ENCODE measurements at regions of chr3 and their contacts with region 1.

Region 1: GRCh38 chr3:197256836-197257444 is 41.5 kb downstream of the DLG1 start:
- DNase-seq: peak; percentile 15
- H3K4me3 ChIP-seq: no peak overlapping the region
- H3K27me3 ChIP-seq: no peaks in the 10 kb centered on the region
- CTCF ChIP-seq: peak; percentile 56

Region 2: GRCh38 chr3:197165890-197166289 is 91.0 kb before region 1 on chr3:
- CTCF ChIA-PET with region 1: no interaction called
- POLR2A ChIA-PET with region 1: no interaction called
- DNase-seq: no peak
- H3K4me3 ChIP-seq: no peak overlapping the region
- H3K27me3 ChIP-seq: no peaks in the 10 kb centered on the region
- CTCF ChIP-seq: no peak

Region 3: GRCh38 chr3:197234947-197235914 is 21.7 kb before region 1 on chr3:
- CTCF ChIA-PET with region 1: interaction called, 10 read pairs
- POLR2A ChIA-PET with region 1: no interaction called
- DNase-seq: no peak
- H3K4me3 ChIP-seq: no peak overlapping the region
- H3K27me3 ChIP-seq: no peaks in the 10 kb centered on the region
- CTCF ChIP-seq: no peak

Region 4: GRCh38 chr3:197270558-197271317 is 13.8 kb after region 1 on chr3:
- CTCF ChIA-PET with region 1: interaction called, 33 read pairs
- POLR2A ChIA-PET with region 1: no interaction called
- DNase-seq: no peak
- H3K4me3 ChIP-seq: no peak overlapping the region
- H3K27me3 ChIP-seq: no peaks in the 10 kb centered on the region
- CTCF ChIP-seq: no peak

Region 5: DNA sequence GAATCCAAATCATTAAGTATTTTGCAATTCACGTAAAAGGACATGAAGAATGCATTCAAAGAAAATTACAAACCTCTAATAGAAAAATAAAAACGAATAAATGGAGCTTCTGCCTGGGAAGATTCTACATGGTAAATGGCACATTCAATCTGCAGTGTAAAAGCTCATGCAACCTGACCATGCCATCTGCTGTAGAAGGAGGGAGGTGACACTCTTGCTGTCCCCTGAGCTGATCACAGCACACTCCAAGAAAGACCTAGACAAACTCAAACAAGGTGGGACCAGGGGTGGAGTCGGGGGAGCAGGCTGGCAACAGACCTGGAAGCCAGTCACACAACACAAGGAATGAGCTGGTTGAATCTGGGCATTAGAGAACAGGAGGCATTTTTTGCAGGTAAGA is 197.1 kb after region 1 on chr3:
- CTCF ChIA-PET with region 1: interaction called, 26 read pairs
- POLR2A ChIA-PET with region 1: no interaction called
- DNase-seq: no peak
- H3K4me3 ChIP-seq: no peak overlapping the region
- H3K27me3 ChIP-seq: no peaks in the 10 kb centered on the region
- CTCF ChIP-seq: peak; percentile 34

Region 6: DNA sequence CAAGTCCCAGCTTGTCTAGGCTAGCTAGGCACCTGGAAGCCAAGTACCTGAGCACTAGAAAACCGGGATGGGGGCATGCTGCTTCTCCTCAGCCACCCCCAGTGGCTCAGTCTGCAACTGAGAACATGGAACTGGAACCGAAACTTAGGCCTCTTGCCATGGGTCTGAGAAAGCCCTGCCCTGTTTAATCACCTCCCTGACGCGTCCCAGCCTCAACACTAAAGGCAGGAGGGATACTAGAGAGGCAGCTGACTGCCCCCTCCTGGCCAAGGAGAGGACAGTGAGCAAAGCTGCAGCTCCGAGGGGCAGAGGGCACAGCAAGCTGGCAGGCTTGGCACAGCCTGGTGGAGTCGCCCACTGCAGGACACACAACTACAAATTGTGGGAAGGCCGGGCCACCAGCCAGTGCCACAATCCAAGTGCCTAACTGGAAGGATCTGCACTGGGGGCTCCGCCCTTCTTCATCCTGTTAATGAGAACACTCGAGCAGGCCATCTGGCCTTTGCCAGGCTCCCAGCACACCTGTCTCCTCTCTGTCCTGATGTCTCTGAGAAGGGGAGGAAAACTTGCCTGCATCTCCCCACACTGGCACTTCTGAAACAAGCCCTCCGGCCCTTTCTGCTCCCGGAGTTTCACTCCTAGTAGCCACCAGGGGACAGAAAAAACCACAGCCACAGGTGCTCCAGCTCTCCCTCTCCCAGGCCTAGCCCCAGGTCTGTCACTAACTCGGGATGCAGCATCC is 245.1 kb after region 1 on chr3:
- CTCF ChIA-PET with region 1: interaction called, 32 read pairs
- POLR2A ChIA-PET with region 1: no interaction called
- DNase-seq: no peak
- H3K4me3 ChIP-seq: no peak overlapping the region
- H3K27me3 ChIP-seq: no peaks in the 10 kb centered on the region
- CTCF ChIP-seq: peak; percentile 46

Region 7: GRCh38 chr3:197511130-197511529 is 254.2 kb after region 1 on chr3:
- CTCF ChIA-PET with region 1: interaction called, 42 read pairs
- POLR2A ChIA-PET with region 1: no interaction called
- DNase-seq: no peak
- H3K4me3 ChIP-seq: no peak overlapping the region
- H3K27me3 ChIP-seq: no peaks in the 10 kb centered on the region; the same call in 1 of the 2 replicates
- CTCF ChIP-seq: no peak